Activated naive CD4-positive, alpha-beta T cell treated with anti-CD3 and anti-CD28 coated beads, Interleukin-2, amount 10 ng/mL, durations not matched to agents 7 days and 5 days (primary cell): ENCODE measurements at regions of chr2 and their contacts with region 1.

Region 1: GRCh38 chr2:99158599-99158998 is 3.8 kb downstream of the LIPT1 start:
- DNase-seq: no peak
- H3K4me3 Mint-ChIP-seq: no peak overlapping the region
- H3K27ac Mint-ChIP-seq: no peak overlapping the region
- H3K4me1 Mint-ChIP-seq: peaks cover 23% of the 10 kb centered on the region
- H3K27me3 Mint-ChIP-seq: no peaks in the 10 kb centered on the region

Region 2: DNA sequence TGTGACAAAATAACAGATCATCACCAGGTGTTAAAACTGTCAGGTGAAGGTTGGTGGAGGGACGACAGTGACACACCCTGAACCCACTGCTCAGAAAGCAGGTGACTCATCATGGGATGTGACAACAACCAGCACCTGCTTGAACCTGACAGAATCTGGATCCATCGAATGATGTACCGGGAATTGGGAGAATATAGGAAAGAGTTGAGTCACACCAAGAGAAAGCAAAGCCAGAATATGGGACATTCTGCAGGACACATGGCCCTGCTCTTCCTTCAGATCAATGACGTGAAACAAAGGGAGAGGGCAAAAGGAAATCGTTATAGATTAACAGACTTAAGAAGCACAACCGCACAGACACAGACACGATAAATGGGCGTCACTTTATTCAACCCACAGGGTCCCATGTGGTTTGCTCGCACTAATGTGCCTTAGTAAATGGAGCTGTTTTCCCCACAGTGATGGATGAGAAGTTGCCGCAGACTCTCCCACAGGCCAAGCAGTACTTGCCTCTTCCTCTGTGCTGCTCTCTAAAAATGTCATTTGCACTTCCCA is 322.7 kb before region 1 on chr2:
- CTCF ChIA-PET with region 1: no interaction called
- DNase-seq: peak; percentile 58
- H3K4me3 Mint-ChIP-seq: peak overlapping the region; percentile 39
- H3K27ac Mint-ChIP-seq: peak overlapping the region; percentile 91
- H3K4me1 Mint-ChIP-seq: peaks cover 53% of the 10 kb centered on the region
- H3K27me3 Mint-ChIP-seq: peaks cover 7% of the 10 kb centered on the region

Region 3: DNA sequence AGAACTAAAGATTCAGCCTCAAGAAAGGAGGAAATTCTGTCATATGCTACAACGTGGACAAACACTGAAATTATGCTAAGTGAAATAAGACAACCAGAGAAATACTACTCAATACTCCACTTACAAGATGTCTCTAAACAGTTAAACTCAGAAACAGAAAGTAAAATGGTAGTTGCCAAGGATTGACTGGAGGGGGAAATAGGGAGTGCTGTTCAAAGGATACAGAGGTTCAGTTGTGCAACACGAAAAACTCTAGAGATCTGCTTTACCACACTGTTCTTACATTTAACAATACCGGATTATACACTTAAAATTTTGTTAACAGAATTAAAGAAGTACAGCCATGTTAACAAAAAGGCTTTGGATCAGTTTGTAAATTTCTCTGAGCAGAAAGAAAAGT is 56.9 kb before region 1 on chr2:
- CTCF ChIA-PET with region 1: no interaction called
- DNase-seq: no peak
- H3K4me3 Mint-ChIP-seq: no peak overlapping the region
- H3K27ac Mint-ChIP-seq: no peak overlapping the region
- H3K4me1 Mint-ChIP-seq: peaks cover 5% of the 10 kb centered on the region
- H3K27me3 Mint-ChIP-seq: no peaks in the 10 kb centered on the region

Region 4: DNA sequence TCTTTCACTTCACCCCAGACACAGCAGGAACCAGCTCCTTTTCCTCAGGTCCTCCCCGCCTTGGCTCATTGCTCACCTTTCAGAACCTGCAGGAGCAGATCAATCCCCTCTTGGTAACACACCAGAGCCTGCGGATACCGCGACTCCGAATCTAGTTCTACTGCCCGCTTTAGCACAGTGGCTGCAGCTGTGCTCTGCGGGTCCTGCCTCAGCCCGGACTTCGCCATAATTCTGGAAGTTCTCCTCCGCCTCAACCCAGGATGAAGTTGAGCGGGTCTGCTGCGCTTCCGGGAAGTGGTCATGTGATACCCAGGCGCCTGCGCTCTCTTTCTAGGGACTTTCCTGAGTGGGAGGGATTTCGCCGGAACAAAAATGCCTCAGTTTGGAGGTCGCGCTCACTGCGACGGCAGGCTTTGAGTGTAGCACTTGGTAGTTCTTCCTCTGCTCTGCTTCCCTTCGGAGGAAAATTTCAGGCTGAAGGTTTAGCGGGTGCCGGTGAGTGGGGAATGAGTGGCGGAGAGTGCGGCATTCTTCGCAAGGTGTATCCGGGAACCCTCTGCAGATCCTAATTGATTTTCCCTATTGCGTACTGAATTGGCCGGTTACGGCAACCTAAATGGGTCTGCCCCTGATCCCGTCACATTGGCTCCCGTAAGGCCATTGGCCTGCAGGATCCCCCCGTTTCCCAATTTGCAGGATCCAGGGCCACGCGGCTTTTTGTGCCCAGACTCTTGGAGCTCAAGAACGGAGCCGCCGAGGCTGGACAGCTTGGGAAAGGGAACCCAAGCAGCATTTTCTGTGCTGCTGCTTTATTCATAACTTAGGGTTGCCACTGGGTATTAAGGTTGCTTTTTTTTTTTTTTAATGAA is 22.4 kb after region 1 on chr2 and contains the starts of genes MITD1 and MRPL30:
- CTCF ChIA-PET with region 1: interaction called, 16 read pairs
- DNase-seq: peak; percentile 93
- H3K4me3 Mint-ChIP-seq: peak within 1 kb of the TSS; percentile 97
- H3K27ac Mint-ChIP-seq: peak within 1 kb of the TSS; percentile 95
- H3K4me1 Mint-ChIP-seq: peaks cover 53% of the 10 kb centered on the region
- H3K27me3 Mint-ChIP-seq: no peaks in the 10 kb centered on the region